ENCODE measurements at regions of chr11 and their contacts with region 1.

Region 1: DNA sequence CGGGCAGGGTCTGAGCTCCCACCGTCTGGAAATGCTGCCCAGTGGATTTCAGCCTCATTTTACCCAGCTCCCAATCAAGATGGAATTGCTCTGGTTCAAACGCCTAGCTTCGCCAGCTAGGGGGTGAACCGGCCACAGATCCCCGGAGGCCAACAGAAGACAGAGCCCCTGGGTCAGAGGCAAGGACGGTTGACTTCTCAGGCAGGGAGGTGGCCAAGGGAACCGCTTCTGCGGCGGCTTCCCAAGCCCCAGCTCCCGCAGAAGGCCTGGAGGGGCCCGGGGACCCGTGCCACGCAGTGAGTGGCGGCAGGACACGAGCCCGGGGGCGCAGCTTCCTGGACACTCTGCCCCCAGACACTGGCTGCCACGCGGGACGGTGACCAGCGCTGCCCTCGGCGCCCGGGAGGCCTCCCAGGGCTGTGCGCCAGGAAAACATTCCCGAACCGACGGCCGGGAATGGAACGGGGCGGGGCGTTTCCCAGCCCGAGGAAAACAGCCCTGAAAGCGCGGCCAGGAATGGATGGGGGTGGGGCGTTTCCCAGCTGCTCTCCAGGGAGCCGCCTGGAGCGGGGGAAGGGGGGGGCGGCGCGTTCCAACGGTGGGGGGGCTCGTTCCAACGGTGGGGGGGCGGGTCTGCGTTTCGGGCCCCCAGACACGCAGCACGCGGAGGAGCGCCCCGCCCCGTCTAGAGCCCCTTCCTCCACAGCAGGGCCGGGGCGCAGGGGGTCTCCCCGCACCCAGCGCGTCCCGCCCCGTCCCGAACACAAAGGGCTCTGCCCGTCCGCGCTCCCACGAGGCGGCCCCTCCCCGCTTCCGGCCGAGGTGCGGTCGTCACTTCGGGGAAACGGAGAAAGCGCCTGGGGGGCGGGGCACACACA is 13.5 kb upstream of the B4GALNT4 start:
- DNase-seq: peak; percentile 97
- H3K4me3 Mint-ChIP-seq: peak overlapping the region; percentile 89
- H3K27ac Mint-ChIP-seq: peak overlapping the region; percentile 95
- H3K4me1 Mint-ChIP-seq: peaks cover 26% of the 10 kb centered on the region
- H3K27me3 Mint-ChIP-seq: peaks cover 5% of the 10 kb centered on the region

Region 2: GRCh38 chr11:326842-327580 is 28.8 kb before region 1 on chr11:
- intact Hi-C with region 1: loop called (anchors 1 kb)
- DNase-seq: peak; percentile 87
- H3K4me3 Mint-ChIP-seq: peak overlapping the region; percentile 79
- H3K27ac Mint-ChIP-seq: peak overlapping the region; percentile 96
- H3K4me1 Mint-ChIP-seq: peaks cover 57% of the 10 kb centered on the region
- H3K27me3 Mint-ChIP-seq: no peaks in the 10 kb centered on the region

Measured in activated CD4-positive, alpha-beta T cell treated with anti-CD3 and anti-CD28 coated beads, Interleukin-2, amount 10 ng/mL, durations not matched to agents 24 days and 14 days (primary cell).